ENCODE measurements at regions of chr4 and their contacts with region 1.

Region 1: DNA sequence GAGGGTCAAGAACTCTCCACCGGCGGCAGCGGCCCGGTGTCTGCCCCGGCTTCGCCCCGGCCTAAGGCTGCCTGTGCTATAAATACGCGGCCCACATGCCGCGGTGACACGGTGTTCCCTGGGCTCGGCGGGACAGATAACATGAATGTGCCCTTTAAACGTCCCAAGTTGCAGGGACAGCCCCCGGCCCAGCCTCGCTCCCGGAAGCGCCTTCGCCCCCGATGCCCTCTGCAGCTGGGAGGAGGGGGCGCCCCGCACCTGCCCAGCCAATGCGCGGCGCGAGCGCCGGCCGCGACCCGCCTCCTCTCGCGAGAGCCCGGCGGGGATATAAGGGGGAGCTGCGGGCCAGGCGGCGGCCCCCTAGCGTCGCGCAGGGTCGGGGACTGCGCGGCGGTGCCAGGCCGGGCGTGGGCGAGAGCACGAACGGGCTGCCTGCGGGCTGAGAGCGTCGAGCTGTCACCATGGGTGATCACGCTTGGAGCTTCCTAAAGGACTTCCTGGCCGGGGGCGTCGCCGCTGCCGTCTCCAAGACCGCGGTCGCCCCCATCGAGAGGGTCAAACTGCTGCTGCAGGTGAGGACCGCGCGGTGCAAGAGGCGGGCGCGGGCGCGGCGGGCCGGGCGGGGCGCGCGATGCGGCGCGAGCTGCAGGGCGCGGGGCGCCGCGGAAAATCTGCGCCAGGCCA is at the start of gene SLC25A4:
- DNase-seq: peak; percentile 91 to 96
- ATAC-seq: peak; percentile 96
- H3K4me3 ChIP-seq: peak within 1 kb of the TSS; percentile 72 to 93
- H3K27ac ChIP-seq: peak within 1 kb of the TSS; percentile 71 to 96
- H3K4me1 ChIP-seq: peaks cover 3 to 5% of the 10 kb centered on the region in 2 donors
- H3K27me3 ChIP-seq: no peaks in the 10 kb centered on the region
- total RNA-seq, gene SLC25A4: 72.6 to 119 TPM

Region 2: GRCh38 chr4:185020293-185020808 is 122.7 kb before region 1 on chr4:
- intact Hi-C with region 1: no loop called
- DNase-seq: no peak
- ATAC-seq: no peak
- H3K4me3 ChIP-seq: no peak overlapping the region
- H3K27ac ChIP-seq: no peak overlapping the region
- H3K4me1 ChIP-seq: no peaks in the 10 kb centered on the region
- H3K27me3 ChIP-seq: no peaks in the 10 kb centered on the region

Region 3: DNA sequence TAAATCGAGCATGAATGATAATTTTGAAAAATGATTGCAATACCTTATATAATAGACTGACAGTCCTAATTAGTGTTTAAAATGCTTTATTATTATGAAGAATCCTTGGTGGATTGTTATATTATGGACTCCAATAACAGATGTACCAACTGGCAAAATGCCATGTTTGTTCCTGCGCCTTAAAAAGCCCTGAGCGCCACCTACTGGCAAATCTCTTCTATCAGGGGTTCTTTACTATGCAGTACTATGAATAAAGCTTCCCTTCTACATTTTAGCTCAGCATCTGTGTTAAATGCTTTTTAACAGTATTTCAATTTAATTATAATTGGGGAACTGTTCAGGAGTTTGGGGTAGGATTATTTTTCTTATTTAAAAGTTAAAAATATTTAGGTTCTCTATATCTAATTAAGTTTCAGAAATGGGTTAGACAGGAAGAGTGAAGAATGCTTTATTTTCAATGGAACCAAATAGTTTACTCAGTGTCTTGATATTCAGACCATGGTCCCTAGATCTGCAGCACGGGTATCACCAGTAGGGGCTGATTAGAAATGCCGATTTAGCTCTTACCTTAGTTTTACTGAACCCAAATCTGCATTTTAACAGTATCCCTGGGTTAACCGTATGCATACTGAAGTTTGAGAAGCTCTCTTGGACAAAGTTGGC is 40.7 kb after region 1 on chr4:
- intact Hi-C with region 1: loop called (anchors 2 kb)
- DNase-seq: peak in 1 of 2 donors; percentile 79
- ATAC-seq: peak; percentile 77
- H3K4me3 ChIP-seq: no peak overlapping the region
- H3K27ac ChIP-seq: peak overlapping the region in 1 of 2 donors; percentile 52
- H3K4me1 ChIP-seq: peaks cover 4 to 10% of the 10 kb centered on the region in 2 donors
- H3K27me3 ChIP-seq: no peaks in the 10 kb centered on the region

Measured in aorta (tissue), 5 donors.